ENCODE measurements at regions of chr10 and their contacts with region 1.

Region 1: DNA sequence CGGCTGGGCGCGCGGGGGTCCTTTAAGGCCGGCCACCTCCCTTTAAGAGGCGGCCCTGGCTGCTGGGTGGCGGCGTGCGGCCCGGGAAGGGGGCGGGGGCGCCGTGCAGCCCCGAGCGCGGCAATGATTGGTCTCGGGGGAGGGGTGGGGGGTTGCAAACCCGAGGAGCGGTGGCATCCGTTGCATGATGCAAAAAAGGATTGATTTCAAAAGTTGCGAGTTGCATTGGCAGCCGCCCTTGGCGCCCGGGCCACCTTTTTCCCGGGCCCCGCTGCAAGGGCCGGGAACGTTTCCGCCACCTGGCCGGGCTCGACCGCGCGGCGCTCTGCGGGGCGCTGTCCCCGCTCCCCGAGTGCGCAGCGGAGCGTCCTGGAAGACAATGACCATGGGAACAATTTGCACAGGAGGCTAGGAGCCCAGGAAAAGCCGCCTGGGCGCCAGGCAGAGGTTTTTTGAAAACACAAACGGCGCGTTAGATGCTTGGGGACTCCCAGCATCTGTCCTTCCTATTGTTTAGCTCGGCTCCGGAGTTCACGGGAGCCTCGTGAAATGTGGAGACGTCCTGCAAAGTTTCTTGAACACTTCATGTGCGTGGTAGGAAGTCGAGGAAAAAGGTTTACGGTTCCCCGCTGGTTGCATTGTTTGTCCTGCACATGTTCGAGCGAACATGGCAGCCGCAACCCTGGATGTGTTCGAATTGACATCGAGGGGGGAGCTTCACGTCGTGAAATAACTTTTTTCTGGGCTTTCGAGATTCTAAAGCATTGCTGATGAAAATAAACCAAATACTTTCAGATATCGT is at the start of gene SEPHS1:
- DNase-seq: peak; percentile 87
- H3K4me3 Mint-ChIP-seq: peak within 1 kb of the TSS; percentile 86
- H3K27ac Mint-ChIP-seq: peak within 1 kb of the TSS; percentile 83
- H3K4me1 Mint-ChIP-seq: peaks cover 13% of the 10 kb centered on the region
- H3K27me3 Mint-ChIP-seq: peaks cover 10% of the 10 kb centered on the region
- CTCF ChIP-seq: no peak
- total RNA-seq, gene SEPHS1: 44.8 and 60.8 TPM in 2 replicates

Region 2: GRCh38 chr10:13291821-13292773 is 56.3 kb before region 1 on chr10:
- CTCF ChIA-PET with region 1: no interaction called
- POLR2A ChIA-PET with region 1: no interaction called
- intact Hi-C with region 1: no loop called
- DNase-seq: no peak
- H3K4me3 Mint-ChIP-seq: no peak overlapping the region
- H3K27ac Mint-ChIP-seq: no peak overlapping the region
- H3K4me1 Mint-ChIP-seq: peaks cover 7% of the 10 kb centered on the region
- H3K27me3 Mint-ChIP-seq: no peaks in the 10 kb centered on the region
- CTCF ChIP-seq: no peak

Region 3: GRCh38 chr10:13382703-13383398 is 34.4 kb after region 1 on chr10:
- CTCF ChIA-PET with region 1: no interaction called
- POLR2A ChIA-PET with region 1: interaction called, 18 read pairs
- intact Hi-C with region 1: loop called (anchors 2 kb)
- DNase-seq: peak; percentile 33
- H3K4me3 Mint-ChIP-seq: peak overlapping the region; percentile 79
- H3K27ac Mint-ChIP-seq: peak overlapping the region; percentile 78
- H3K4me1 Mint-ChIP-seq: peaks cover 17% of the 10 kb centered on the region
- H3K27me3 Mint-ChIP-seq: no peaks in the 10 kb centered on the region
- CTCF ChIP-seq: no peak